Breast epithelium (tissue), 4 donors: ENCODE measurements at regions of chr5 and their contacts with region 1.

Region 1: GRCh38 chr5:69341520-69342161 is 9.0 kb upstream of the CCDC125 start:
- DNase-seq: no peak
- H3K4me3 ChIP-seq: no peak overlapping the region
- H3K27ac ChIP-seq: no peak overlapping the region
- H3K4me1 ChIP-seq: no peaks in the 10 kb centered on the region
- H3K27me3 ChIP-seq: no peaks in the 10 kb centered on the region
- CTCF ChIP-seq: no peak
- POLR2A ChIP-seq: no peak

Region 2: DNA sequence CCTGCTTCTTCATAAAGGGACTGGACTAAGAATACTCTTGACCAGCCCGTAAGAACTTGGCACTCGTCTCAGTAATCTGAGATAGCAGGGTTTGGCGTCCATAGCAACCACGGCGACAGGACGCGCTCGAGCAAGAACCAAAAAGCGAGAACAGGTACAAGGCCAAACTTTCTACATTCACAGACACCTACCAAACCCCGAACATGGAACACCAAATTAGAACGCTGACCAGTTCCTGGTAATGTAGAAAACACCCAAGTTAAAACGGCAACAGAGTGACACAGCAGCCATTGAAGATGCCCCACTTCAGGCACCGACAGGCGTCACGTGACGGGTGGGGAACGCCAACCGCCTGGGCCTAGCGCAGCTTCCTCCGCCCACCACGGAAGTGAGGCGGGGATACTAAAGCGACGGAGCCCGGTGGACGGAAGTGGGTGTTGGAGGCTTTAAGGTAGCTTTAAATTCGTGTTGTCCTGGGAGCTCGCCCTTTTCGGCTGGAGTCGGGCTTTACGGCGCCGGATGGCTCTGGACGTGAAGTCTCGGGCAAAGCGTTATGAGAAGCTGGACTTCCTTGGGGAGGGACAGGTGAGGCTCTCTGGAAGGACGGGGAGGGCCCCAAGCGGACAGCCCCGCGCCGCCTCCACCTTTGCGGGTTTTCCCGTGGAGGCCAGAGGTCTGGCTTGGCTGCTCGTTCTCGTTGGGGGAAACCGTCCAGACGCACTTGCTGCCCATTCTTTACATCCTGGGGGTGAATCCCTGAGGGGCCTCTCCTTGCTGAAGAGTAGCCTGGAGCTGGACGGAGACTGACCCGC is 107.0 kb before region 1 on chr5 and contains the start of gene CDK7:
- intact Hi-C with region 1: no loop called
- DNase-seq: peak; percentile 92
- H3K4me3 ChIP-seq: peak within 1 kb of the TSS; percentile 69 to 92 (median 88)
- H3K27ac ChIP-seq: peak within 1 kb of the TSS; percentile 80 to 91
- H3K4me1 ChIP-seq: no peaks in the 10 kb centered on the region
- H3K27me3 ChIP-seq: no peaks in the 10 kb centered on the region
- CTCF ChIP-seq: peak in 1 of 3 donors; percentile 19
- POLR2A ChIP-seq: no peak
- total RNA-seq, gene CDK7: 13.4 to 28.7 (median 20.3) TPM

Region 3: GRCh38 chr5:69359699-69360098 is 18.1 kb after region 1 on chr5:
- intact Hi-C with region 1: loop called (anchors 1 kb)
- DNase-seq: no peak
- H3K4me3 ChIP-seq: no peak overlapping the region
- H3K27ac ChIP-seq: no peak overlapping the region
- H3K4me1 ChIP-seq: no peaks in the 10 kb centered on the region
- H3K27me3 ChIP-seq: no peaks in the 10 kb centered on the region
- CTCF ChIP-seq: no peak
- POLR2A ChIP-seq: no peak